ENCODE measurements at regions of chr4 and their contacts with region 1.

Region 1: DNA sequence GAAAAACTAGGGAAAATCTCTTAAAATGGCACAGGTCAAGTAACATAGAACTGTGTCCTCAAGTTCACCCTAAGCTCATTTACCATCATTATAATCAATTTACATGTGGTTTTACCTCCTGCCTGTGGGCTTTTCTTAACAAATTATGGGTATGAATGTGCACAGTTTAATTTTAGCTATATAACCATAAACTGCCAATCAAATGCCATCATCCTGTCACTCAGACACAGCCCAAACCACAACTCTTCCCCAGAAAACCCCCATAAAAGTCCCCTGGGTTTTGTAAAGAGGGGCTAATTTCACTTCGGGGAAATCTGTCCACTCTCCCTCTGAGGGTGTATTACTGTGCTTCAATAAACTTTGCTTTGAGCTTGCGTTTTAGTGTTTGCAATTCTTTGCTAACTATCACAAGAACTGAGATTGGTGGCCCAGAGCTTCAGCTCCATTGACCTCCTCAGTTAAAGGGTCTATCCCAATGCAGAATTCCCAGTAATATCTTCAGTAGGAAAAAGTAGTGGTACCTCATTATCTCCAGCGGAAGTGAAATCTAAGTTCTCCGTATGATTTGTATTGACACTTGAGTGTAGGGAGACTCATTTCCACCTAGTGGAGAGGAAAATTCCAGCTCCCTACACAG is 394.6 kb downstream of the SPOCK3 start:
- DNase-seq: no peak
- ATAC-seq: no peak
- H3K4me3 ChIP-seq: no peak overlapping the region
- H3K27ac ChIP-seq: no peak overlapping the region
- H3K4me1 ChIP-seq: no peaks in the 10 kb centered on the region
- H3K27me3 ChIP-seq: no peaks in the 10 kb centered on the region
- CTCF ChIP-seq: no peak

Region 2: DNA sequence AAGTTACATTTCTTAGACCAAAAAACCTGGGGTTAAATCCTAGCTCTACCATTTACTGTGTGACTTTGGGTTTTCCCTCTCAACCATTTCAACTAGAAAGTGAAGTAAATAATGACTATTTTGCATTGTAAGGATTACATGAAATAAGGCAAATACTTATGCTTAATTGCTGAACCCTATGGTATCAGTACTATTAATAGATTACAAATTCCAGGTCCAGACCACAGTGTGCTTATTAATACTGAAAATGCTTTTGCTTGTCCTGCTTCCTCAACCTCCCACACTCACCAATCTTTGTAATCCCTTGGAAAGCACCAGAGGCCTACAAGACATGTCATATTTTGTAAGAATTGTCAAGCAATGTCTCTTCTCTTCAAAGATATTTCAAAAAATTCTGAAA is 62.0 kb before region 1 on chr4:
- intact Hi-C with region 1: loop called in 1 of 10 experiments (anchors 5 kb)
- DNase-seq: no peak
- ATAC-seq: no peak
- H3K4me3 ChIP-seq: no peak overlapping the region
- H3K27ac ChIP-seq: no peak overlapping the region
- H3K4me1 ChIP-seq: no peaks in the 10 kb centered on the region
- H3K27me3 ChIP-seq: no peaks in the 10 kb centered on the region
- CTCF ChIP-seq: no peak

Measured in heart right ventricle (tissue), 16 donors.